Heart right ventricle (tissue), 16 donors: ENCODE measurements at regions of chr5 and their contacts with region 1.

Region 1: DNA sequence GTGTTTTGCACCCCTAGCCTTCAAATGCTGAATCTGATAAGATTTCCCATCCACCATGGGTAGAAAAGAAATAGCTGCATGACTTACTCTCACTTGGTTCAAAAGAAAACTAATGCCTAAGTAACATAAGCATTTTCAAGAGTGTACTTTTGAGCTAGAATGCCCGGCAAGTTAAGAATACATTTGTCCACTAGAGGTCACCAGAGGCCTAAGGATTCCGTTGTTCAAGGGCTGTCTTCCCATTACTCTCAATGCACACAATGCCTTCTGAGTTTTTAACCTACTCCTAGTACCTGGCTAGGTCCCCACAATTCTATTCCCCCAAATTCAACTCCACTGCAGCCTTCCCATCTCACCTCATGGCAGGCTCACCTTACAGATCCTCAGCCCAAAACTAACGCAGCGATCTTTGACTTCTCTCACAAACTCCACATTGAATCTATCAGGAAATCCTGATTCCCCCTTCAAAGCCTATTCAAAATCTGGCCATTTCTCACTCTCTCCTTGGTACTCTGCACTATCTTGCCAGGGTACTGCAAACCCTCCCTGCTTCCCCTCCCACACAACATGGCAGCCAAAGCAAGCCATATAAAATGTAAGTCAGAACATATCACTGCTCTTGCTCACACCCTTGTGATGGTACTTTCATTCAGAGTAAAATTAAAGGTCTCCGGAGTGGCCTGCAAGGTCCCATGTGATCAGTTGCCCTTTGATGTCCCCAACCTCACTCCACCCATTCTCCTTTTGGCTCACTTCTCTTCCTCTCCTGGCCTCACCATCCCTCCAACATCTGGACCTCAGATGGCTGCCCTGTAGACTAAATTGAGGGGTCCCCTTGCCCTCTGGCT is 13.4 kb downstream of the OXCT1 start:
- DNase-seq: peak in 1 of 2 donors; percentile 71
- ATAC-seq: peak; percentile 75 to 91 (median 84)
- H3K4me3 ChIP-seq: no peak overlapping the region
- H3K27ac ChIP-seq: no peak overlapping the region
- H3K4me1 ChIP-seq: peaks cover 0 to 4% (median 0%) of the 10 kb centered on the region in 9 donors
- H3K27me3 ChIP-seq: no peaks in the 10 kb centered on the region
- CTCF ChIP-seq: peak; percentile 72 to 87 (median 82)

Region 2: GRCh38 chr5:41918105-41918504 is 61.2 kb after region 1 on chr5:
- intact Hi-C with region 1: loop called in 4 of 10 experiments (anchors 5 to 10 kb)
- DNase-seq: no peak
- ATAC-seq: no peak
- H3K4me3 ChIP-seq: no peak overlapping the region
- H3K27ac ChIP-seq: no peak overlapping the region
- H3K4me1 ChIP-seq: peaks cover 0 to 14% (median 0%) of the 10 kb centered on the region in 9 donors
- H3K27me3 ChIP-seq: no peaks in the 10 kb centered on the region
- CTCF ChIP-seq: no peak

Region 3: GRCh38 chr5:41924872-41925554 is 68.1 kb after region 1 on chr5 and contains the start of gene FBXO4:
- intact Hi-C with region 1: loop called in 5 of 10 experiments (anchors 1 to 10 kb)
- DNase-seq: peak; percentile 85 to 91
- ATAC-seq: peak; percentile 98 to 100 (median 99)
- H3K4me3 ChIP-seq: peak within 1 kb of the TSS; percentile 45 to 90 (median 82)
- H3K27ac ChIP-seq: peak within 1 kb of the TSS; percentile 76 to 99 (median 95)
- H3K4me1 ChIP-seq: peaks cover 0 to 35% (median 14%) of the 10 kb centered on the region in 9 donors
- H3K27me3 ChIP-seq: no peaks in the 10 kb centered on the region
- CTCF ChIP-seq: peak; percentile 19 to 85 (median 58)
- total RNA-seq, gene FBXO4: 3.6 to 7.2 (median 5.3) TPM

Region 4: DNA sequence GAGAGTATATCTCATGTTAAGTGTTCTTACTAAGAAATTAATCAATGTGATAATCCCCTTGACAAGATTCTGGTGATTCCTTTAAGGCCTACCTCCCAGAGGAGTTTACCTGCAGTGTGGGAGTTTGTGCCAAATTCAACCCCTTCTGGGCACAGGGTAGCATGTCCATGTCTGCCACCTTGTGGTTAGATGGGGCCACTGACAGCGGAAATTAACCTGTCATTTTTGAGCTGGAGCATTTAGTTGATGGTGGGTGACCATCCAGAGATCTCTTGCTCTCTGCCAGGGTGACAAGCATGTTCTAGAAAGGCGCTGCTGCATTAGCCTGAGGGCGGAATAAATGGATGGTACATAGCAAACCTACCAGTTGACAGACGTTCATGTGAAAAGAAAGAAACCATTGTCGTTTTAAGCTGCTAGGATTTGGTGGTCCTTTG is 200.4 kb after region 1 on chr5:
- intact Hi-C with region 1: loop called in 9 of 10 experiments (anchors 2 to 10 kb)
- DNase-seq: peak; percentile 8 to 18
- ATAC-seq: peak in 2 of 8 donors; percentile 27 to 47
- H3K4me3 ChIP-seq: no peak overlapping the region
- H3K27ac ChIP-seq: no peak overlapping the region
- H3K4me1 ChIP-seq: no peaks in the 10 kb centered on the region
- H3K27me3 ChIP-seq: no peaks in the 10 kb centered on the region
- CTCF ChIP-seq: peak; percentile 36 to 72 (median 63)

Region 5: DNA sequence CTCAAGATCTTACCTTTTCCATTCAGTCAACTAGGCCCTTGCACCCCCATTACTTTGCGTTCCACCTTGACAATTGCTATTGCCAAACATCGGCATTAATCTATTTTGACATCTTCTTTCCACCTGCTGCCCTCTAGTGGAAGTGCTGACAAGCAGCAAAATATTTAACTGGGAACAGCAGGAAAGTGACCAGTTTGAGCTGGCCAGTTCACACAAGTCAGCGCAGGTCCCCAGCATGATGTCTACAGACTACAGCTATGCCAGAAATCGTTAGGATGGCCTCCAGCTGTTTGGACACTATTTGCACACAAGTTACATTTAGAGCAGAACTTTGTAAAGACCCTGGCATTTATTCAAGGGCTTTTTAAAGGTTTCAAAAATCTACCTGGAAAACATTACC is 726.5 kb after region 1 on chr5:
- intact Hi-C with region 1: loop called in 1 of 10 experiments (anchors 5 kb)
- DNase-seq: peak; percentile 22 to 72
- ATAC-seq: peak in 6 of 8 donors; percentile 26 to 47 (median 38)
- H3K4me3 ChIP-seq: no peak overlapping the region
- H3K27ac ChIP-seq: no peak overlapping the region
- H3K4me1 ChIP-seq: peaks cover 0 to 48% (median 28%) of the 10 kb centered on the region in 9 donors
- H3K27me3 ChIP-seq: no peaks in the 10 kb centered on the region
- CTCF ChIP-seq: peak; percentile 68 to 87 (median 80)

Region 6: GRCh38 chr5:42767491-42768105 is 910.7 kb after region 1 on chr5:
- intact Hi-C with region 1: loop called in 8 of 10 experiments (anchors 2 to 10 kb)
- DNase-seq: no peak
- ATAC-seq: peak in 1 of 8 donors; percentile 46
- H3K4me3 ChIP-seq: no peak overlapping the region
- H3K27ac ChIP-seq: no peak overlapping the region
- H3K4me1 ChIP-seq: peaks cover 0 to 6% (median 0%) of the 10 kb centered on the region in 9 donors
- H3K27me3 ChIP-seq: no peaks in the 10 kb centered on the region
- CTCF ChIP-seq: peak in 8 of 9 donors; percentile 26 to 76 (median 60)